CD8-positive, alpha-beta T cell (primary cell): ENCODE measurements at regions of chr5 and their contacts with region 1.

Region 1: DNA sequence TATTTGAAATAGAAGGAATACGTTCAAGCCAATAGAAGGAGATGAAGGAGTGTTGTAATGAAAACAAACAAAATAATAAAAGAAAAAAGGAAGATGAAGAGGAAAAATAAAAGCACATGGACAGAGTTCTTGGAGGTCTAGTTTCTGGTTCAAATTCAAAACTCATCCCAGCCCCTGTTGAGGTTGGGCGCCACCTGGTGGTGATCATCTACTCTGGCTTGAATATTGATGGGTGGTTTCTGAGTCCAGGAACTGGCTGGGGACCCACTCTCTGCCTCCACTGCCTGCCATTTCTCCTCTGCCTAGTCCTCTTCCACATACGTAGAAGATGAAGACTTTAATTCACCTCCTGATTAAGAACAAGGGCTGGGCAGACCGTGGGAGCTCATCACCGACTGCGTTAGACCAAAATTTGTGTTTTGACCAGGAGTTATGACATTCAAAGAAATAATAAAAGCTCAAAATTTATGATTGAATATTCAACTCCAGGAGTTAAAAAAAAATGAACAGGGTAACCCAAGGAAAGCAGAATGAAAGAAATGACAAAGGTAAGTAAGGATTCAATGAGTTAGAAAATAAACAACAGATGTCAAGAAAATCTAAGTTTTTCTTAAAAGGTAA is 99.0 kb upstream of the SLC1A3 start:
- DNase-seq: peak; percentile 18 to 79 (median 67)
- ATAC-seq: peak; percentile 26
- H3K4me3 ChIP-seq: no peak overlapping the region
- H3K4me3 Mint-ChIP-seq: no peak overlapping the region
- H3K27ac ChIP-seq: no peak overlapping the region
- H3K27ac Mint-ChIP-seq: no peak overlapping the region
- H3K4me1 ChIP-seq: no peaks in the 10 kb centered on the region
- H3K4me1 Mint-ChIP-seq: no peaks in the 10 kb centered on the region
- H3K27me3 ChIP-seq: no peaks in the 10 kb centered on the region
- H3K27me3 Mint-ChIP-seq: peaks cover 2% of the 10 kb centered on the region
- CTCF ChIP-seq: peak; percentile 90

Region 2: GRCh38 chr5:36214434-36214833 is 293.0 kb before region 1 on chr5:
- CTCF ChIA-PET with region 1: interaction called, 3 read pairs
- POLR2A ChIA-PET with region 1: no interaction called
- intact Hi-C with region 1: loop called in 1 of 2 experiments (anchors 5 kb)
- DNase-seq: peak in 1 of 9 experiments; percentile 5
- ATAC-seq: no peak
- H3K4me3 ChIP-seq: no peak overlapping the region
- H3K4me3 Mint-ChIP-seq: no peak overlapping the region
- H3K27ac ChIP-seq: no peak overlapping the region
- H3K27ac Mint-ChIP-seq: no peak overlapping the region
- H3K4me1 ChIP-seq: no peaks in the 10 kb centered on the region
- H3K4me1 Mint-ChIP-seq: no peaks in the 10 kb centered on the region
- H3K27me3 ChIP-seq: no peaks in the 10 kb centered on the region
- H3K27me3 Mint-ChIP-seq: no peaks in the 10 kb centered on the region
- CTCF ChIP-seq: no peak

Region 3: GRCh38 chr5:36264202-36264760 is 243.2 kb before region 1 on chr5:
- CTCF ChIA-PET with region 1: interaction called, 6 read pairs
- POLR2A ChIA-PET with region 1: no interaction called
- intact Hi-C with region 1: loop called in 1 of 2 experiments (anchors 2 kb)
- DNase-seq: no peak
- ATAC-seq: no peak
- H3K4me3 ChIP-seq: no peak overlapping the region
- H3K4me3 Mint-ChIP-seq: no peak overlapping the region
- H3K27ac ChIP-seq: no peak overlapping the region
- H3K27ac Mint-ChIP-seq: no peak overlapping the region
- H3K4me1 ChIP-seq: no peaks in the 10 kb centered on the region
- H3K4me1 Mint-ChIP-seq: no peaks in the 10 kb centered on the region
- H3K27me3 ChIP-seq: peaks cover 0 to 2% of the 10 kb centered on the region in 2 experiments
- H3K27me3 Mint-ChIP-seq: peaks cover 20% of the 10 kb centered on the region
- CTCF ChIP-seq: no peak

Region 4: DNA sequence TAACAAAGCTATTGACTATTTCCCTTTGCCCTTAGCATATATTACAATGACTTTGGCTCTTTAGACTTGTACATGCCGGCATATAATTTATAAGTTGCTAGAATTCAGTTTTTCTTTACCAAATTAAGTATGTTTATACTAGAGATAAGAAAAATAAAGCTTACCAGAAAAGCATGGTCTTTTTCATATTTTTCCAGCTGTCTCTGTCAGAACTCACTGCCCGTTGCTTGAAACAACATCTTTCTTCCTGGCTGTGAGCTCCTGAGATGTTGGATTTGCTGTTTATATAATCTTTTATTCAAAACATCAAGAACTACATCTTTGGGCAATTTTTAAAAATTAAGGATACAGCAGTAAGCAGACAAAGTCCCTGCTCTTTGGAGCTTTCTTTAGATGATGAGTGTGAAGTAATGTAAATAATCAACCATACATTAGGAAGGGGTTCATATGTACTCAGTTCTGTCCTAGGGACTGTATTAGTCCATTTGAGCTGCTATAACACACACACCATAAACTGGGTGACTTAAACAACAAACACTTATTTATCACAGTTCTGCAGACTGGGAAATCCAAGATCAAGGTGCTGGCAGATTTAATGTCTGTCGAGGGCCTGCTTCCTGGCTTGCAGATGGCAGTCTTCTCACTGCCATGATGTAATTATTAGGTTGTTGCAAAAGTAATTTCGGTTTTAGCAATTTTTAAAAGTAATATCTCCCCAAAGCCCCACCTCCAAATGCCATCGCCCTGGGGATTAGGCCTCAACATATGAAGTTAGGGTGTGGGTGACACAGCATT is 160.3 kb before region 1 on chr5:
- CTCF ChIA-PET with region 1: no interaction called
- POLR2A ChIA-PET with region 1: no interaction called
- intact Hi-C with region 1: no loop called
- DNase-seq: no peak
- ATAC-seq: no peak
- H3K4me3 ChIP-seq: no peak overlapping the region
- H3K4me3 Mint-ChIP-seq: no peak overlapping the region
- H3K27ac ChIP-seq: no peak overlapping the region
- H3K27ac Mint-ChIP-seq: no peak overlapping the region
- H3K4me1 ChIP-seq: no peaks in the 10 kb centered on the region
- H3K4me1 Mint-ChIP-seq: no peaks in the 10 kb centered on the region
- H3K27me3 ChIP-seq: no peaks in the 10 kb centered on the region
- H3K27me3 Mint-ChIP-seq: peaks cover 7% of the 10 kb centered on the region
- CTCF ChIP-seq: no peak

Region 5: DNA sequence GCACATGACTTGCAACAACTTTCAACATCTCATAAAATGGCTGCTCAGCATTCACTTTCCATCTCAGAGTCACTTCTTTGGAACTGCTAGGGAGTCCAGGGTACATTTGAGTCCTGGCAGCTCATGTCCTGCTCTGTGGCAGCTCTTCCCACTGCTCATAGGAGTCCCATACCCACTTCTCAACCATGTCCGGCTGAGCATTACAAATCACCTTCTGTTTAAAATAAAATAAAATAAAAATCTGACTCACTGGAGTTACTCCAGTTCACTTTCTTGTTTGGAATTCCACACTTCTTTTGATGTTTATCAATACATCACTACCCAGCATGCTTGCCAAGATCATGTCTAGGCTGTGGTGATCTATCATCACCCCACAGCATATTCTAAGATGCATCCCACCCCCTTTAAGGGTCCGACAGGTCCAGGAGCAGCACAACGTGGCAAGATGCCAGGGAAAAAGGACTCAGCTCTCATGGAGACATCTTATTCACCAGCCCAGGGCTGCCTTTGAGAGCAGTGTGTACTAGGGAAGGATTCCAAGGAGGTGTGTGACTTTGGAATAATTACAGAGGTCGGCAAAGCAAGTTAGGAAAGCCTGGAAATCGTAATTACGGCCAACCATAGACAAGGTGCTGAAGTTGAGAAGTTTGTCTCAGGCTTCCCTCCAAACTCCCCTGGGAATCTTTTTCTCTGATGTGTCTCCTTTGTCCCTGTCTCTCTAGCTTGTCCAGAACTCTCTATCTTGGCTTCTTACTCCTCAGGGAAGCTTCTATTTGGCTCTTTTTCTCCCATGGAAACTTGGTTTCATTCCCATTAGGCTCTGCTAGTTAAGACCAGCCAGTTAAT is 12.5 kb before region 1 on chr5:
- CTCF ChIA-PET with region 1: interaction called, 11 read pairs
- POLR2A ChIA-PET with region 1: no interaction called
- intact Hi-C with region 1: no loop called
- DNase-seq: no peak
- ATAC-seq: no peak
- H3K4me3 ChIP-seq: no peak overlapping the region
- H3K4me3 Mint-ChIP-seq: no peak overlapping the region
- H3K27ac ChIP-seq: no peak overlapping the region
- H3K27ac Mint-ChIP-seq: no peak overlapping the region
- H3K4me1 ChIP-seq: no peaks in the 10 kb centered on the region
- H3K4me1 Mint-ChIP-seq: no peaks in the 10 kb centered on the region
- H3K27me3 ChIP-seq: no peaks in the 10 kb centered on the region
- H3K27me3 Mint-ChIP-seq: peaks cover 6% of the 10 kb centered on the region
- CTCF ChIP-seq: no peak